Activated B cell treated with CpG ODN at 0.5 μM for 24 hours (primary cell): ENCODE measurements at regions of chr13 and their contacts with region 1.

Region 1: GRCh38 chr13:49569956-49570689 is 15.2 kb downstream of the RCBTB1 start:
- DNase-seq: no peak
- ATAC-seq: no peak
- H3K4me3 Mint-ChIP-seq: no peak overlapping the region
- H3K27ac Mint-ChIP-seq: no peak overlapping the region
- H3K4me1 Mint-ChIP-seq: peaks cover 20% of the 10 kb centered on the region
- H3K27me3 Mint-ChIP-seq: no peaks in the 10 kb centered on the region
- CTCF ChIP-seq: no peak

Region 2: DNA sequence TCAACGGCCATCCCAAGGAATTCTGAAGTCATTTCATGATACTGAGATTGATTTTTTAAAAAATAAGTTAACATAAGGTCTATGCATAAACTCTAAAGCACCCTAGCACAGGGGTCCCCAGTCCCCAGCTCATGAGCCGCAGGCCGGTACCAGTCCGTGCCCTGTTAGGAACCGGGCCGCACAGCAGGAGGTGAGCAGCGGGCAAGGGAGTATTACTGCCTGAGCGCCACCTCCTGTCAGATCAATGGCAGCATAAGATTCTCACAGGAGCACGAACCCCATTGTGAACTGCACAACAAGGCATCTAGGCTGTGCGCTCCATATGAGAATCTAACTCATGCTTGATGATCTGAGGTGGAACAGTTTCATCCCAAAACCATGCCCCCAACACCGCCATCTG is 15.7 kb before region 1 on chr13:
- CTCF ChIA-PET with region 1: no interaction called
- POLR2A ChIA-PET with region 1: no interaction called
- intact Hi-C with region 1: loop called (anchors 2 kb)
- DNase-seq: no peak
- ATAC-seq: no peak
- H3K4me3 Mint-ChIP-seq: no peak overlapping the region
- H3K27ac Mint-ChIP-seq: no peak overlapping the region
- H3K4me1 Mint-ChIP-seq: peaks cover 2% of the 10 kb centered on the region
- H3K27me3 Mint-ChIP-seq: no peaks in the 10 kb centered on the region
- CTCF ChIP-seq: no peak

Region 3: DNA sequence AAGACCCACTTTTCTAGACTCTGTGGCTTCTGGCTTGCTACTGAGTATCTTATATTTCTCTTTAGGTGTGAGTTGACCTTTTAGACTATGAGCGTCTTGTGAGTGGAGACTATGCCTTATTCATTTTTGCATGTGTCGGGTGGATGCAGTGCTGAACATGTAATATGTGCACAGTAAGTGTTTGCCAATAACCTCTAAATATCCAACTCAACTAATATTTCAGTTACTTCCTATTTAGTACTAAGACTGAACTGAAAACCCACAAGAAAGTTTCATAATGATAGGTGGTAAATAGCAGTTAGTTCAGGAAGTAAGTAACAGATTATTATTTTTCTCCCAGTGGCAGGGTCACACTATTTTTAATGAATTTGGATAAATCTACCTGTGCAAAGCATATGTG is 714.4 kb after region 1 on chr13:
- CTCF ChIA-PET with region 1: no interaction called
- POLR2A ChIA-PET with region 1: no interaction called
- intact Hi-C with region 1: no loop called
- DNase-seq: no peak
- ATAC-seq: peak; percentile 52
- H3K4me3 Mint-ChIP-seq: no peak overlapping the region
- H3K27ac Mint-ChIP-seq: no peak overlapping the region
- H3K4me1 Mint-ChIP-seq: peaks cover 14% of the 10 kb centered on the region
- H3K27me3 Mint-ChIP-seq: no peaks in the 10 kb centered on the region
- CTCF ChIP-seq: no peak

Region 4: GRCh38 chr13:50893211-50893852 is 1323.2 kb after region 1 on chr13:
- CTCF ChIA-PET with region 1: no interaction called
- POLR2A ChIA-PET with region 1: no interaction called
- intact Hi-C with region 1: no loop called
- DNase-seq: no peak
- ATAC-seq: peak; percentile 79
- H3K4me3 Mint-ChIP-seq: peak overlapping the region; percentile 78
- H3K27ac Mint-ChIP-seq: peak overlapping the region; percentile 96
- H3K4me1 Mint-ChIP-seq: peaks cover 65% of the 10 kb centered on the region
- H3K27me3 Mint-ChIP-seq: no peaks in the 10 kb centered on the region
- CTCF ChIP-seq: no peak